AG04450 (cell line): ENCODE measurements at regions of chr10 and their contacts with region 1.

Region 1: GRCh38 chr10:28663576-28664313 is 13.6 kb upstream of the BAMBI start:
- DNase-seq: peak; percentile 73
- H3K4me3 ChIP-seq: no peak overlapping the region
- H3K27ac ChIP-seq: no peak overlapping the region
- H3K27me3 ChIP-seq: peaks cover 13% of the 10 kb centered on the region
- CTCF ChIP-seq: peak; percentile 99

Region 2: DNA sequence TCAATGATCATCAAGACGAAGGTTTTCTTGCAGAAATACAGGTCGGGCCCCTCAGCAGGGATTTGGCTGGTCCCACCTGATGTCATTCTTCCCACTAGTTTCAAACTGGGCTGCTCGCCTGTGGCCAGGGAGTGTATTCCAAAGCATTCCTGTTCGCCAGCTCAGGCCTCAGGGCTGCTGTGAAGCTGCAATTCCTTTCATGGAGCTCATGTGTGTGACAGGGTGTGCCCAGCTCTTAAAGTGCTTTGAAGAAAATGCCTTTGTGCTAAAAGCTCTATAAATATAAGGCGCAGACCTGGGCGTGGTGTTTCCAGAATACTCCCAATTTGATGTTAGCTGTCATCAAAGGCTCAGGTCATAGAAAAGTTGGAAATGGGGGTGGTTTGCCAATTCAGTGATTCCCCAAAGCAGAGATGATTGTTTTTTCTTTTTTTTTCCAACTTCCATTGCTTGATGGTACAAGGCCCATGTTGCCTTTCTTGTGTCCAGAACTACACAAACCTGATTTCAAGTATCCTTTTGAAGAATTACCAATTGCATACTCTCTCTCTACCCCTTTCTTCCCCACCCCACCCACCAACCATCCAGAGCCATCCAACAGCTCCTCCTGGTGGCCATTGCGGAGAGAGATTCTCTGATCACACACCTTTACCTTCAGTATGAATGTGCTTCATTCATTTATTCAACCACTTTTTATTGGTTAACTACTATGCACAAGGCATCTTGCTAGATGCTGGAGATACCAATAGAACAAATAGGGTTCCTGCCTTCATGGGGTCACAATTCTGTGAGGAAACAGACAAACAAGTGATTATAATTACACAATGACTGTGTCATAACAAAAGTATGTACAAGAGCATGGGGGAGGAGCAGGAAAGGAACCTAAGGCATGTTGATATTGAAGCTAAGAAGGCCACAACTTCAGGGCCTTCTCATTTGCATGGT is 327.9 kb after region 1 on chr10:
- CTCF ChIA-PET with region 1: interaction called, 15 read pairs
- POLR2A ChIA-PET with region 1: no interaction called
- DNase-seq: no peak
- H3K4me3 ChIP-seq: no peak overlapping the region
- H3K27ac ChIP-seq: no peak overlapping the region
- H3K27me3 ChIP-seq: no peaks in the 10 kb centered on the region
- CTCF ChIP-seq: peak; percentile 75

Region 3: DNA sequence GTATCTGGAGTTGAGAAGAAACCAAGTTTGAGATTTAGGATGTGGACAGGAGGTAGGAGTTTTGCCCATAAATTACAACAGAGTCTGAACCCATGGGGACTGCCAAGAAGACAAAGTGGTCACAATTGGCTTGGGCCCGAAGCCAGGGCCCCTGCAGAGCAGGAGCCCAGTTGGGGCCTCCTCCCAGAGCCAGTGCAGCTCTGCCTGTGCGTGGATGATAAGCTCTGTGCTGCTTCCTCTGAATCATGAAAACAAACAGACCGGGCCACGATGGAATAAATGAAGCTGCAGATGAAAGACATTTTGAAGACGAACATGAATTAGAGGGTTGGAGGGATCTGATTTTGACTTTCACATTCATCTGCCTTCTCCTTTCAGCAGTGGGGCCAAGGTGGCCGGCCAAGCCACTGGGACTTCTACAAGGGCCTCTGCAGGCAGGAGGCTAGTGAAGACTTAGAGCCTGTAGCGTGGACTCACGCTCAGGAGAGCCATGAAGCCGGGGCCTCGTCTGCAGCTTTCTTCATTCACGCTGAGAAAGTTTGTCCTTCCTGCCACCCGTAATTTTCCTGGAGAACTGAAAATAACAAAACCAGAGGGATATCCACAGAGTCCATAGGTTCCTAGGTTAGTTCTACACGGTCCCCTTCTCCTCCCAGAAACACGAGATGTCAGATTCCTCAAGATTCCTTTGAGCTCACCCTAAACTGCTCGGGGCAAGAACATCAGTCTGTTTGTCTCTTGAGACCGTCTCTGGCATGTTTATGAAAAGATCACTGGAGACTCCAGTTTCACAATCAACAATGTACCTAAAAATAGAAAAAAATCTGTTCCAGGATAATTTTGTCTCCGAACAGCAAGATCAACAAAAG is 468.4 kb after region 1 on chr10:
- CTCF ChIA-PET with region 1: interaction called, 68 read pairs
- POLR2A ChIA-PET with region 1: interaction called, 3 read pairs
- DNase-seq: no peak
- H3K4me3 ChIP-seq: no peak overlapping the region
- H3K27ac ChIP-seq: no peak overlapping the region
- H3K27me3 ChIP-seq: no peaks in the 10 kb centered on the region
- CTCF ChIP-seq: no peak

Region 4: DNA sequence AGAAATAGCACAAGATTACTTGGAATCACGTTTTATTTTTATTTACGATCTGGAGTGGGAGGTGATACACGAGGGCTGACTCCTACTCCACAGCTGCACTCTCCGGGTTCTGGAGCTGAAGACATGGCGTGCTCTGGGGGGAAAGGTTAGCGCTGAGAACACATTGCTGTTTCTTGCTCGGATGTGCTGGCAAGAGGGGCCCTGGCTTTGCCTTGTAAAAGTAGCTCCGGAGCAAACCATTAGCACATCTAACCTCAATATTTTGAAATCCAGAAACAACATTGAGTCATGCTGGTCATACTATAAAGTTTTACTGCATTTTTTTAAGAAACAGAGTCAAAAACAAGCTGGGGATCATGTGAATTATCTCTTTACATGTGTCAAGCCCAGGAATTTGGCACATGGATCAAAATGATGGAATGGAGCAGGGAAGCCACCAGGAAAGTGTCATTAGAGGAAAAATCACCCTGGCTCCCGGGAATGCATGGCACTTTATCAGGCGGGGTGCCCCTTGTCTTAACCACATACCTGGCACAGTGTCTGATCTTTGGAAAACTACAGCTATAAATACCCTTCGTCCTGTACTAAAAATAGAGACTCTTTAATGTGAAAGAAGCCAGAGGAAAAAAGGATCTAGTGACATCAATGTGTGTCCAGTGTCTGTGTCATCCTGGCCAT is 593.5 kb after region 1 on chr10:
- CTCF ChIA-PET with region 1: interaction called, 13 read pairs
- POLR2A ChIA-PET with region 1: no interaction called
- DNase-seq: peak; percentile 71
- H3K4me3 ChIP-seq: peak overlapping the region; percentile 17
- H3K27ac ChIP-seq: peak overlapping the region; percentile 52
- H3K27me3 ChIP-seq: peaks cover 43% of the 10 kb centered on the region
- CTCF ChIP-seq: no peak

Region 5: GRCh38 chr10:29324220-29324841 is 660.6 kb after region 1 on chr10:
- CTCF ChIA-PET with region 1: interaction called, 10 read pairs
- POLR2A ChIA-PET with region 1: no interaction called
- DNase-seq: no peak
- H3K4me3 ChIP-seq: no peak overlapping the region
- H3K27ac ChIP-seq: no peak overlapping the region
- H3K27me3 ChIP-seq: peaks cover 11% of the 10 kb centered on the region
- CTCF ChIP-seq: no peak